ENCODE measurements at regions of chr15 and their contacts with region 1.

Region 1: GRCh38 chr15:101127506-101128076 is 124.3 kb downstream of the CHSY1 start:
- DNase-seq: peak; percentile 24
- ATAC-seq: peak; percentile 74
- H3K4me3 ChIP-seq: peak overlapping the region in 1 of 3 experiments; percentile 27; a peak in 2 of 6 replicates
- H3K27ac ChIP-seq: no peak overlapping the region
- H3K4me1 ChIP-seq: peaks cover 41% of the 10 kb centered on the region
- H3K27me3 ChIP-seq: peaks cover 2 to 33% of the 10 kb centered on the region in 2 experiments; a peak in 3 of 5 replicates
- CTCF ChIP-seq: no peak
- EP300 ChIP-seq: no peak
- POLR2A ChIP-seq: no peak
- RAD21 ChIP-seq: no peak

Region 2: GRCh38 chr15:101251830-101252820 is 124.5 kb after region 1 on chr15 and contains the start of gene CHSY1:
- CTCF ChIA-PET with region 1: no interaction called
- POLR2A ChIA-PET with region 1: no interaction called
- in situ Hi-C with region 1: no loop called
- intact Hi-C with region 1: loop called (anchors 10 kb)
- DNase-seq: peak; percentile 67
- ATAC-seq: peak; percentile 73
- H3K4me3 ChIP-seq: peak within 1 kb of the TSS; percentile 77 to 82 (median 81)
- H3K27ac ChIP-seq: peak within 1 kb of the TSS; percentile 52
- H3K4me1 ChIP-seq: peaks cover 62% of the 10 kb centered on the region
- H3K27me3 ChIP-seq: no peaks in the 10 kb centered on the region
- CTCF ChIP-seq: 0 out of 2 replicates have a peak, but pooled peaks have one; percentile 28
- EP300 ChIP-seq: no peak
- POLR2A ChIP-seq: peak; percentile 35 to 80; a peak in 3 of 4 replicates
- RAD21 ChIP-seq: peak; percentile 19
- total RNA-seq, gene CHSY1: 12.8 and 13.7 TPM in 2 replicates